Cardiac septum (tissue), 1 donor: ENCODE measurements at regions of chr17 and their contacts with region 1.

Region 1: GRCh38 chr17:27332485-27333409 is 38.8 kb downstream of the WSB1 start:
- DNase-seq: peak; percentile 99

Region 2: DNA sequence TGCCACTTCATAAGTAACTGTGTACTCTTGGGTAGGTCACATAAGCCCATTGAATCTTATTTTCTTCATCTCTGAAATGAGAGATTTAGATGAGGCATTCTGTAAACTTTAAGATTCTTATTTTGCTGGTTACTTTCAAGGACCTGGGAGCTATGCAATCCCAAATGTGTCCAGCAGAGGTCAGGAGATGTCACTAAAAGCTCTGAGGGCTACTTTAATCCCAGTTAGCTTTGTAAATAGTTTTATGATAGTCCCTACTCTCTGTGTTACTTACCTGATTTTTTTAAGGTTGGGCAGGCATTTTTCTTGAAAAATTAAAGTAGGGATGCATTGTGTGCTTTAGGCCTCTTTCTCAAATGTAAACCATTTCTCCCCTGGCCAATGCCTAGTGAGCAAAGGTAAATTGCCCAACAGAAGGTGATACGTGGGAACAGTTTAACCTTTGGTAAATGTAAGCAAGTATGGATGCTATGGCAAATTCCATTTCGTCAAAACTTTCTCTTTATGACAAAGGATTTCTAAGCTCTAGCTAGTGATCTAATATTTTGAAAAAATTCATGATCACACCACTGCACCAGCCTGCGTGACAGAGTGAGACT is 95.9 kb before region 1 on chr17:
- intact Hi-C with region 1: loop called (anchors 2 kb)
- DNase-seq: no peak

Region 3: DNA sequence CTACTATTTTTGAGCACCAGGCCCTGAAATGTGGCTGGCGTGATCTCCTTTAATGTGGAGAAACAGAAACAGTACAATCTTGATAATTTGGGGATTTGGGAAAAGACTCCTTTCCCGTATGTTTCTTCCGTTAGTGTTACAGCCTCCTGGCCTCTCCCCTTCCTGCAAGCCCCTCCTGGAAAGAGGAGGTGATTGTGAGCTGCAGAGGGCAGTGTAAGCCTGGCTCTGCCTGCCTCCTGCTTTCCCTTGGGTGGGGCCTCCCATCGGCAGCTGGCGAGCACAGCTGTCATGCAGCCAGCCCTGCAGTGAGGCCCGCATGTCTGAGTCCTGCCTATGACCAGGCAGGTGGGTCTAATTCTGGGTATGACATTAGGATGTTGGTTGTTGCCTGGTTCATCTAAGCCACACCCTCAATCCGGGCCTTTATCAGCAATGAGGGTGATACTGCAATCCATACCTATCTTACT is 87.5 kb before region 1 on chr17:
- intact Hi-C with region 1: loop called (anchors 1 kb)
- DNase-seq: peak; percentile 92